H1 (cell line): ENCODE measurements at regions of chr11 and their contacts with region 1.

Region 1: GRCh38 chr11:133927690-133928627 is 28.8 kb downstream of the IGSF9B start:
- DNase-seq: peak in 1 of 2 experiments; percentile 89
- H3K4me3 ChIP-seq: no peak overlapping the region
- H3K27ac ChIP-seq: no peak overlapping the region; the same call in 1 of the 2 replicates
- H3K4me1 ChIP-seq: peaks cover 0 to 2% (median 0%) of the 10 kb centered on the region in 4 experiments; a peak in 4 of 7 replicates
- H3K27me3 ChIP-seq: no peaks in the 10 kb centered on the region
- CTCF ChIP-seq: peak; percentile 86 to 96 (median 94)
- EP300 ChIP-seq: no peak
- POLR2A ChIP-seq: no peak
- RAD21 ChIP-seq: peak; percentile 90

Region 2: DNA sequence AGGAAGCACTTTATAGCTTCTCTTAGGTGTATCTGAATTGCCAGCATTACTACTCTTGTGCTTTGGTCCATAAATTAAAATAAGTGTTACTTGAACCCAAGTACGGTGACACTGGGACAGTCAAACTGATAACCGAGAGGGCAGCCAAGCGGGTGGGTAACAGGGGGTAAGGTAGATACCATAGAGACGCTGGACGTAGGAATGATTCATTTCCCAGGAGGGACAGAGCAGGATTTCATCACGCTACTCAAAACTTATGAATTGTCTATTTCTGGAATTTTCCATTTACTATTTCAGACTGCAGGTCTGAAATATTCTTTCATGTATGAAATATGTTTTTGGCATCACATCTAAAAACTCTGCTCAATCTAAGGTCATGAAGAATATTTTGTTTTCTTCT is 67.8 kb before region 1 on chr11:
- CTCF ChIA-PET with region 1: no interaction called
- POLR2A ChIA-PET with region 1: no interaction called
- DNase-seq: no peak
- H3K4me3 ChIP-seq: no peak overlapping the region
- H3K27ac ChIP-seq: no peak overlapping the region
- H3K4me1 ChIP-seq: peaks cover 0 to under 1% (median 0%) of the 10 kb centered on the region in 4 experiments; a peak in 1 of 7 replicates
- H3K27me3 ChIP-seq: no peaks in the 10 kb centered on the region
- CTCF ChIP-seq: no peak
- EP300 ChIP-seq: no peak
- POLR2A ChIP-seq: no peak
- RAD21 ChIP-seq: no peak

Region 3: DNA sequence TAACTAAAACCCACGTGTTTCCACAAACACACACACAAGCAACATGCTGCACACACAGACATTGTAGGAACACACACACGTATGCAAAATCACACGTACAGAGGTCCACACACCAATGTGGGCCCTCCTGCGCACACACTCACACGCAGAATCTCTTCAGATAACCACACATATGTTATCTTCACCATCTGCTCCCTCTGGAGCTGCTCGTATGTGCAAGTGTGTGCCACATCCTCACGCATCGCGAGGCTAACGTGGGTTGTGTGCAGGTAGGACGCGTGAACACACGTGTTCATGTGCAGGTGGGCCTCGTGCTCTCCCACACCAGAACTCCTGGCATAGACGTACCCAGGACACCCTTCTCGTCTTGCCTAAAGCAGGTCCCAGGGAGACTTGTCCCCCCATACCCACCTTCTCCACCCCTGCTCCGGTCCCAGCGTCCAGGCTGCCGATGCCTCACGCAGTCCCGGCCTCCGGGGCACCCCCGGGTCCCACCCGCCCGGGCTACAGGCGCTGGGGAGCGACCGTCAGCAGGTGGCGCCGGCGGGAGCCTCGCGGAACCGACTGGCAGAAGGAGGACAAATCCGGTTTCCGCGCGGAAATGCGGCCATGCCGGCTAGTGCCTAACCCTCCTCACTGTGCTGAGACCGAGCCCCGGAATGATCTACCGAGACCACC is 39.1 kb after region 1 on chr11:
- CTCF ChIA-PET with region 1: interaction called, 11 read pairs
- POLR2A ChIA-PET with region 1: no interaction called
- DNase-seq: peak in 1 of 2 experiments; percentile 91
- H3K4me3 ChIP-seq: no peak overlapping the region
- H3K27ac ChIP-seq: no peak overlapping the region
- H3K4me1 ChIP-seq: peaks cover 0 to 4% (median 0%) of the 10 kb centered on the region in 4 experiments; a peak in 2 of 7 replicates
- H3K27me3 ChIP-seq: peaks cover 0 to 9% (median 3%) of the 10 kb centered on the region in 4 experiments; a peak in 5 of 7 replicates
- CTCF ChIP-seq: peak; percentile 58 to 71 (median 66)
- EP300 ChIP-seq: no peak
- POLR2A ChIP-seq: no peak
- RAD21 ChIP-seq: peak; percentile 35 to 65

Region 4: GRCh38 chr11:134014511-134014910 is 86.6 kb after region 1 on chr11:
- CTCF ChIA-PET with region 1: interaction called, 10 read pairs
- POLR2A ChIA-PET with region 1: no interaction called
- DNase-seq: no peak
- H3K4me3 ChIP-seq: no peak overlapping the region
- H3K27ac ChIP-seq: no peak overlapping the region
- H3K4me1 ChIP-seq: no peaks in the 10 kb centered on the region; a peak in 1 of 7 replicates
- H3K27me3 ChIP-seq: 0 out of 7 replicates have a peak, but pooled peaks cover 0 to 4% (median 0%) of the 10 kb centered on the region in 4 experiments
- CTCF ChIP-seq: peak; percentile 70 to 82 (median 80)
- EP300 ChIP-seq: no peak
- POLR2A ChIP-seq: no peak
- RAD21 ChIP-seq: peak; percentile 71 to 86

Region 5: DNA sequence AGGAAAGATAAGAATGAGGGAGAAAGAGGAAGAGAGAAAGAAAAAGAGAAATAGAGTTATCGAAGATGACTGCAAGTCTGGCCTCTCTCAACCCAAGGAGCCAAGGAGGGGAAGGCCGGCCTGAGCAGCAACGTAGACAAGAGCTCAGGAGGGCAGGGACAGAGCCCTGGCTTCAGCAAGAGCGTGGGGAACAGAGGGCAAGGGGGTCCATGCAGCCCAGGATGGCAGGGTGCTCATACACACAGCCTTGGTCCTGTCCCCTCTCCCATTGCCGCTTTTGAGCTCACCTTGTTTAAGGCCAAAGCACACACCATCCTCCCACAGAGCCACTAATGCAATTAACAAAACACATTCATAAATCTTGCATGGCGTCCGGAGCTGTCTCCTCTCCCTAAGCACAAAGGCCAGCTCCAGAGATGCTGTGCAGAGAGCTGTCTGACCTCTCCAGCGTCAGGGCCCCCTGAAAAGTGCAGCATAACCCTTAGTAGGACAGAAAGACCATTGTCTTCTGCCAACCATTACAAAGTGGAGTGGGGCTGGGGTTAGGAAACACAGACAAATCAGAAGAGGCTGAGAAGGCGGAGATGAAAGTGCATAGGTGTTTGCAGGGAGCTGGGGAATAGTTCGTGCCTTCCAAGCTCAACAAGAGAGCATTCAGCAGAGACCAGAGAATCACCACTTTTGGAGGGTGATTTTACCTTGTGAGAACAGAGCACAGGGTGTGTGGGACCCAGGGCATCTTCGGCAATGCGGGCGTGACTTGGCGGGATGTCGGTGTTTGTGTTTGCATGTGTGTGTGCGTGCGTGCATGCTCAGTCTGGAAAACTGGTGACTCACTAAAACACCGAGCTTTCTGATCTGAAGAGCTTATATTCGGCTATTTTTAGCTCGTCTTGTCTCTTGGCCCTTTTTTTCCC is 112.7 kb after region 1 on chr11:
- CTCF ChIA-PET with region 1: interaction called, 32 read pairs
- POLR2A ChIA-PET with region 1: no interaction called
- DNase-seq: no peak
- H3K4me3 ChIP-seq: no peak overlapping the region
- H3K27ac ChIP-seq: no peak overlapping the region; the same call in 1 of the 2 replicates
- H3K4me1 ChIP-seq: peaks cover 3 to 13% (median 7%) of the 10 kb centered on the region in 4 experiments
- H3K27me3 ChIP-seq: no peaks in the 10 kb centered on the region; a peak in 2 of 7 replicates
- CTCF ChIP-seq: no peak
- EP300 ChIP-seq: no peak
- POLR2A ChIP-seq: no peak
- RAD21 ChIP-seq: no peak

Region 6: DNA sequence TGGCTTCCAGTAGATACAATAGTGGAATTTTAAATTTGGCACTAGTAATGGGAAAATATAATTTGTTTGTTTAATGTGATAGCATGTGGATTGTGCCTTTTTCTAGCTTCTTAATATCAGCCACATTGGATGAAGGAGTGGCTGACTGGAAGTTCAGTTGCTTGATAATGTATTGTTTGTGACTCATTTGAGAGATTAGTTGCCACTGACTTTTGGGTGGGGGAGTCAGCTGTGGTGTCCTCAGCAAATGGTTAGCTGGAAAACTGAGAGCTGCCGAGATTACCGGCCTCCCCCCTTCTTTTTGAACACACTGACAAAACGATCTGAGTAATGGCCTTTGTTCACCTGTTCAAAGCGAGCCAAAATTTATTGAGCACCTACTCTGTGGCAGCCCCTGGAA is 146.4 kb after region 1 on chr11:
- CTCF ChIA-PET with region 1: no interaction called
- POLR2A ChIA-PET with region 1: no interaction called
- DNase-seq: no peak
- H3K4me3 ChIP-seq: no peak overlapping the region
- H3K27ac ChIP-seq: no peak overlapping the region
- H3K4me1 ChIP-seq: peaks cover 0 to 9% (median under 1%) of the 10 kb centered on the region in 4 experiments; a peak in 2 of 7 replicates
- H3K27me3 ChIP-seq: peaks cover 0 to 2% (median 0%) of the 10 kb centered on the region in 4 experiments; a peak in 3 of 7 replicates
- CTCF ChIP-seq: no peak
- EP300 ChIP-seq: no peak
- POLR2A ChIP-seq: no peak
- RAD21 ChIP-seq: no peak